ENCODE measurements at regions of chr15 and their contacts with region 1.

Region 1: GRCh38 chr15:74950078-74951000 is 6.2 kb downstream of the RPP25 start:
- DNase-seq: peak; percentile 59
- H3K4me3 ChIP-seq: no peak overlapping the region
- H3K27ac ChIP-seq: no peak overlapping the region
- H3K4me1 ChIP-seq: no peaks in the 10 kb centered on the region
- H3K27me3 ChIP-seq: no peaks in the 10 kb centered on the region
- CTCF ChIP-seq: peak; percentile 99 to 100

Region 2: GRCh38 chr15:74635228-74635627 is 315.1 kb before region 1 on chr15:
- CTCF ChIA-PET with region 1: no interaction called
- dilution Hi-C with region 1: no loop called
- in situ Hi-C with region 1: loop called (anchors 10 kb)
- intact Hi-C with region 1: loop called (anchors 1 kb)
- DNase-seq: peak; percentile 55
- H3K4me3 ChIP-seq: no peak overlapping the region
- H3K27ac ChIP-seq: no peak overlapping the region
- H3K4me1 ChIP-seq: no peaks in the 10 kb centered on the region
- H3K27me3 ChIP-seq: no peaks in the 10 kb centered on the region
- CTCF ChIP-seq: peak; percentile 88 to 96

Region 3: GRCh38 chr15:74781431-74782258 is 168.7 kb before region 1 on chr15 and contains the start of gene CSK:
- CTCF ChIA-PET with region 1: no interaction called
- dilution Hi-C with region 1: no loop called
- in situ Hi-C with region 1: loop called in 1 of 2 experiments (anchors 5 kb)
- intact Hi-C with region 1: no loop called
- DNase-seq: peak; percentile 49
- H3K4me3 ChIP-seq: peak within 1 kb of the TSS; percentile 67 to 79 (median 77)
- H3K27ac ChIP-seq: peak within 1 kb of the TSS; percentile 39
- H3K4me1 ChIP-seq: peaks cover 42% of the 10 kb centered on the region
- H3K27me3 ChIP-seq: no peaks in the 10 kb centered on the region
- CTCF ChIP-seq: peak; percentile 32 to 58
- total RNA-seq, gene CSK: 23.2 to 64.6 TPM

Region 4: GRCh38 chr15:74799856-74800547 is 150.3 kb before region 1 on chr15:
- CTCF ChIA-PET with region 1: no interaction called
- dilution Hi-C with region 1: no loop called
- in situ Hi-C with region 1: no loop called
- intact Hi-C with region 1: loop called (anchors 1 kb)
- DNase-seq: peak; percentile 95
- H3K4me3 ChIP-seq: peak overlapping the region in 1 of 3 experiments; percentile 12
- H3K27ac ChIP-seq: peak overlapping the region; percentile 91
- H3K4me1 ChIP-seq: peaks cover 28% of the 10 kb centered on the region
- H3K27me3 ChIP-seq: no peaks in the 10 kb centered on the region
- CTCF ChIP-seq: peak; percentile 96 to 100

Region 5: DNA sequence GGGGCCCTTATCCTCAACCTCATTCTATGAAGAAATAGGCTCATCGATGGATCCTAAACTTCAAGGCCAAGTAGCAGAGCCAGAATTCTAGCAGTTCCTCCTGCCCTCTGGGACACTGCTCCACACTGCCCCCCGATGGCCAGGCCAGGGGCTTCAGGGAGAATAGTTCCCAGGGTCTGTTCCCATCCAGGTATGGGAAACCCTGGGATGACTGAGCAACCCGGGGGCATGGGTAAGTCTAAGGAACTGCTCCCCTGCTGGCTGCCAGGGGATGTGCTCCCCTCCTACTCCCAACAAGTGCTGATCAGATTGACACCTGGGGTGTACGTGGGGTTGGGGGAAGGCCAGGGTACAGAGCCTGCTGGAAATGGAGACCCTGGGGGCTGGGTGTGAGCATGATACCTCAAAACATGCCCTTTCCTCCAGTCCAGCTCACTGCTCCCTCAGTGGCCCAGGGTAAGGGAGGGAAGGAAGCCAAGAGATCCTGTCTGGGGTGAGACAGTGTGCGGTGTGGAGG is 115.0 kb before region 1 on chr15:
- CTCF ChIA-PET with region 1: no interaction called
- dilution Hi-C with region 1: no loop called
- in situ Hi-C with region 1: no loop called
- intact Hi-C with region 1: loop called (anchors 1 kb)
- DNase-seq: peak; percentile 70
- H3K4me3 ChIP-seq: no peak overlapping the region
- H3K27ac ChIP-seq: no peak overlapping the region
- H3K4me1 ChIP-seq: no peaks in the 10 kb centered on the region
- H3K27me3 ChIP-seq: no peaks in the 10 kb centered on the region
- CTCF ChIP-seq: peak; percentile 84 to 98

Region 6: GRCh38 chr15:74920456-74920855 is 29.9 kb before region 1 on chr15:
- CTCF ChIA-PET with region 1: no interaction called
- dilution Hi-C with region 1: no loop called
- in situ Hi-C with region 1: no loop called
- intact Hi-C with region 1: no loop called
- DNase-seq: no peak
- H3K4me3 ChIP-seq: no peak overlapping the region
- H3K27ac ChIP-seq: no peak overlapping the region
- H3K4me1 ChIP-seq: no peaks in the 10 kb centered on the region
- H3K27me3 ChIP-seq: no peaks in the 10 kb centered on the region
- CTCF ChIP-seq: no peak

Region 7: DNA sequence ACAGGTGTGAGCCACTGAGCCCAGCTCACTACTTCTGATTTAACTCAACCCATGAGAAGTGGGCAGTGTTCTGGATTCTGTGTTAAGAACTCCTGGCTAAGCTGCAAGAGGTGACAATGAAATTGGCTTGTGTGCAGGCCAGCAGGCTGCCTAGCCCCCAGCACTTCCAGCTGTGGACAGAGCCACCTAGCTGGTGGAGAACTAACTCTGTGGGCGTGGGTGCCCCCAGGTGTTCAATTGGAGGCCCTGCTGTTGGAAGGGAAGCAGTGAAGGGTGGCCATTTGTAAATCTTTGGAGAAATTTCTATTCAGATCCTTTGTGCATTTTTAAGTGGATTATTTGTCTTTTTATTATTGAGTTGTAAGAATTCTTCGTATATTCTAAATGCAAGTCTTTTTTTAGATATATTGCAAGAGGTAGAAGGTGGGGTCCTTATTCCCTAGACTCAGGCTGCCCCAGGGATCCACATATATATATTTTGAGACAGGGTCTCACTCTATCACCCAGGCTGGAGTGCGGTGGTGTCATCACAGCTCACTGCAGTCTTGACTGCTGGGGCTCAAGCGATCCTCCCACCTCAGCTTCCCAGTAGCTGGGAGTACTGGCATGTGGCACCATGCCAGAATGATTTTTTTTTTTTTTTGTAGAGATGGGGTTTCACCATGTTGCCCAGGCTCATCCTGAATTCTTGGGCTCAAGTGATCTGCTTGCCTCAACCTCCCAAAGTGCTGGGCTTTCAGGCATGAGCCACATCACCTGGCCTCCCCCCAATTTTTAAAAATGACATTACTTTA is 37.9 kb after region 1 on chr15:
- CTCF ChIA-PET with region 1: no interaction called
- dilution Hi-C with region 1: no loop called
- in situ Hi-C with region 1: no loop called
- intact Hi-C with region 1: loop called (anchors 2 kb)
- DNase-seq: peak; percentile 43
- H3K4me3 ChIP-seq: no peak overlapping the region
- H3K27ac ChIP-seq: no peak overlapping the region
- H3K4me1 ChIP-seq: peaks cover 6% of the 10 kb centered on the region
- H3K27me3 ChIP-seq: no peaks in the 10 kb centered on the region
- CTCF ChIP-seq: peak; percentile 53 to 68

Region 8: DNA sequence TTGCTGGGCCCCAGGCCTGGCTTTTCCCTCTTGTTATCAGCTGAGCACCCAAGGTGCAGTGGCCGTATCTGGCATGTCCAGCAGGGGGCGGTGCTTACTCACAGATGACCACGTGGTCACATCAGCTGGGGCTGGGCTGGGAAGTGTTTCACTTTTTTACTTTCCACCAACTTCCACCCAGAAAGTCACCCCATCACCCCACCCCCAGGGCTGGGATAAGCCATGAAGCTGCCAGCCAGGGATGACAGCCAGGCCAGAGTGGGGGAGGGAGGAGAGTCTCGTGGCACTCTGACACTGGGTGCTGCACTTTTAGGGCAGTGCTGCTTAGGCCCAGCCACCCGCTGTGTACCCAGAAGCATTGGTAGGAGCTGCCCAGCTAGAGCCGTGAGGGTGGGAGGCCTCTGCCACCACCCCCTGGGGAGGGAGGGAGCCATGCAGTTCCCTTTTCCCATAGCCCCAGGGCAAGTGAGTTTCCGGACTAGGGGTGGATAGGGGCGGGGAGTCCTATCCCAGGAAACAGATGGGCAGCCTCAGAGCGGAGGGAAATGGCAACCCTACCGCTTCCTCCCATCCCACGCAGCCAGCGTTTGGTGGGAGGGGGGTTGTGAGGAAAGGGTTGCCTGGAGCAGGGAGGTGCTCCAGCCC is 79.2 kb after region 1 on chr15:
- CTCF ChIA-PET with region 1: no interaction called
- dilution Hi-C with region 1: no loop called
- in situ Hi-C with region 1: no loop called
- intact Hi-C with region 1: no loop called
- DNase-seq: peak; percentile 66
- H3K4me3 ChIP-seq: no peak overlapping the region
- H3K27ac ChIP-seq: no peak overlapping the region
- H3K4me1 ChIP-seq: peaks cover 18% of the 10 kb centered on the region
- H3K27me3 ChIP-seq: no peaks in the 10 kb centered on the region
- CTCF ChIP-seq: peak; percentile 89 to 92